H1 (cell line): ENCODE measurements at regions of chr11 and their contacts with region 1.

Region 1: GRCh38 chr11:120235024-120235861 is 4.7 kb upstream of the POU2F3 start:
- DNase-seq: peak; percentile 84 to 92
- H3K4me3 ChIP-seq: no peak overlapping the region
- H3K27ac ChIP-seq: no peak overlapping the region
- H3K4me1 ChIP-seq: no peaks in the 10 kb centered on the region; a peak in 2 of 7 replicates
- H3K27me3 ChIP-seq: peaks cover 3 to 13% (median 10%) of the 10 kb centered on the region in 4 experiments
- CTCF ChIP-seq: peak; percentile 94 to 98 (median 98)
- EP300 ChIP-seq: no peak
- POLR2A ChIP-seq: no peak
- RAD21 ChIP-seq: peak; percentile 98 to 100

Region 2: GRCh38 chr11:120182790-120183491 is 52.3 kb before region 1 on chr11:
- CTCF ChIA-PET with region 1: interaction called, 237 read pairs
- POLR2A ChIA-PET with region 1: interaction called, 5 read pairs
- DNase-seq: peak in 1 of 2 experiments; percentile 76
- H3K4me3 ChIP-seq: no peak overlapping the region
- H3K27ac ChIP-seq: no peak overlapping the region
- H3K4me1 ChIP-seq: peaks cover 1 to 14% (median 4%) of the 10 kb centered on the region in 4 experiments; a peak in 4 of 7 replicates
- H3K27me3 ChIP-seq: peaks cover 0 to 28% (median 21%) of the 10 kb centered on the region in 4 experiments; a peak in 4 of 7 replicates
- CTCF ChIP-seq: peak; percentile 58 to 83 (median 64)
- EP300 ChIP-seq: no peak
- POLR2A ChIP-seq: no peak
- RAD21 ChIP-seq: peak; percentile 49 to 64

Region 3: GRCh38 chr11:120210626-120211521 is 24.4 kb before region 1 on chr11 and contains the start of gene OAF:
- CTCF ChIA-PET with region 1: interaction called, 207 read pairs
- POLR2A ChIA-PET with region 1: interaction called, 3 read pairs
- DNase-seq: peak; percentile 58 to 85
- H3K4me3 ChIP-seq: peak within 1 kb of the TSS; percentile 43 to 68 (median 58)
- H3K27ac ChIP-seq: no peak within 1 kb of the TSS
- H3K4me1 ChIP-seq: peaks cover 4 to 12% (median 8%) of the 10 kb centered on the region in 4 experiments
- H3K27me3 ChIP-seq: peaks cover 67 to 94% (median 87%) of the 10 kb centered on the region in 4 experiments
- CTCF ChIP-seq: no peak
- EP300 ChIP-seq: no peak
- POLR2A ChIP-seq: no peak
- RAD21 ChIP-seq: no peak
- total RNA-seq, gene OAF: 1.1 and 1.3 TPM in 2 replicates

Region 4: DNA sequence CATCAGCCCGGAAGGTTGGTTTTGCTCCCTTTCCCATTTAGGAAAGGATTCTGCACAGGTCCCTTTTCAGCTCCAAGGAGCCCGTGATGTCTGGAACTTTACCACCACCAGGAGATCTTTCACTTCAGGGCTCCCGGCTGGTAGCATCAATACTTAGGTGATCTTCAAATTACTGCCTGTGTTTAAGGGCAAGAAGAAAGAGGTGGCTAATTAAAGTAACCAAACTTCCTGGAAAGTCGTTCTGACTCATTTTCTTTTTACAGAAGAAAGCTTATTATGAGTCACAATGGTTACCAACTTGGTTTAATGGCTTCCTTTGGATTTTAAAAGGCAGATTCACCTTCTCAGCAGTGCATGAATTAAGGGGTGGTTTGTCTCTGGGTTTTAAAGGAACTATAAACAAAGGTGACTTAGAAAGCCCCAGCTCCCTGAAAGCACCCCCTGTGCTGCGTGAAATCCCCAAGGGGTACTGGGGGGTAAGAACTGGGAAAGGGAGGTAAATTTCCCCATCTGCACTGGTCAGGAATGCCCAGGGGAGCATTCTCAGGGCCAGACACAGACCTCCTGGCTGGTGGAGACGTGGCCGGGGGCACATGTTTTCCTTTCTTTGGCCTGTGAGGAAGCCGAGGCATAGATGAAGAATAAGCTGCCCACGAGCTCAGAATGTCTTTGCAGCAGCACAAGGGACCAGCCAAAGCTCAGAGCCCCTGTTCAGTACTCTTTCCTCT is 13.5 kb after region 1 on chr11:
- CTCF ChIA-PET with region 1: interaction called, 102 read pairs
- POLR2A ChIA-PET with region 1: interaction called, 6 read pairs
- DNase-seq: no peak
- H3K4me3 ChIP-seq: no peak overlapping the region
- H3K27ac ChIP-seq: 0 out of 2 replicates have a peak overlapping the region, but pooled peaks have one; percentile 31
- H3K4me1 ChIP-seq: peaks cover 0 to 16% (median 5%) of the 10 kb centered on the region in 4 experiments
- H3K27me3 ChIP-seq: no peaks in the 10 kb centered on the region
- CTCF ChIP-seq: no peak
- EP300 ChIP-seq: peak in 1 of 2 experiments; percentile 17; a peak in 1 of 3 replicates
- POLR2A ChIP-seq: no peak
- RAD21 ChIP-seq: no peak

Region 5: GRCh38 chr11:120254788-120255518 is 19.7 kb after region 1 on chr11:
- CTCF ChIA-PET with region 1: interaction called, 102 read pairs
- POLR2A ChIA-PET with region 1: interaction called, 9 read pairs
- DNase-seq: peak; percentile 73 to 75
- H3K4me3 ChIP-seq: peak overlapping the region in 3 of 4 experiments; percentile 29 to 50 (median 42); a peak in 6 of 8 replicates
- H3K27ac ChIP-seq: no peak overlapping the region
- H3K4me1 ChIP-seq: peaks cover 9 to 24% (median 14%) of the 10 kb centered on the region in 4 experiments
- H3K27me3 ChIP-seq: peaks cover 0 to 7% (median 3%) of the 10 kb centered on the region in 4 experiments; a peak in 4 of 7 replicates
- CTCF ChIP-seq: no peak
- EP300 ChIP-seq: no peak
- POLR2A ChIP-seq: no peak
- RAD21 ChIP-seq: no peak

Region 6: GRCh38 chr11:120272303-120272702 is 37.1 kb after region 1 on chr11:
- CTCF ChIA-PET with region 1: interaction called, 25 read pairs
- POLR2A ChIA-PET with region 1: interaction called, 3 read pairs
- DNase-seq: no peak
- H3K4me3 ChIP-seq: no peak overlapping the region
- H3K27ac ChIP-seq: no peak overlapping the region
- H3K4me1 ChIP-seq: no peaks in the 10 kb centered on the region
- H3K27me3 ChIP-seq: no peaks in the 10 kb centered on the region
- CTCF ChIP-seq: no peak
- EP300 ChIP-seq: no peak
- POLR2A ChIP-seq: no peak
- RAD21 ChIP-seq: no peak

Region 7: GRCh38 chr11:120303004-120303637 is 67.9 kb after region 1 on chr11:
- CTCF ChIA-PET with region 1: interaction called, 1,412 read pairs
- POLR2A ChIA-PET with region 1: interaction called, 69 read pairs
- DNase-seq: peak; percentile 64 to 87
- H3K4me3 ChIP-seq: no peak overlapping the region
- H3K27ac ChIP-seq: no peak overlapping the region
- H3K4me1 ChIP-seq: peaks cover 0 to 14% (median 8%) of the 10 kb centered on the region in 4 experiments; a peak in 6 of 7 replicates
- H3K27me3 ChIP-seq: peaks cover 0 to 4% (median 0%) of the 10 kb centered on the region in 4 experiments; a peak in 2 of 7 replicates
- CTCF ChIP-seq: peak; percentile 96 to 100 (median 100)
- EP300 ChIP-seq: no peak
- POLR2A ChIP-seq: no peak
- RAD21 ChIP-seq: peak; percentile 87 to 92